K562 (cell line): ENCODE measurements at regions of chr1 and their contacts with region 1.

Region 1: GRCh38 chr1:44652445-44653106 is 21.7 kb downstream of the TMEM53 start:
- DNase-seq: peak; percentile 84 to 89 (median 86)
- ATAC-seq: peak; percentile 95
- H3K4me3 ChIP-seq: no peak overlapping the region
- H3K27ac ChIP-seq: no peak overlapping the region
- H3K4me1 ChIP-seq: peaks cover 0 to 17% of the 10 kb centered on the region in 2 experiments; a peak in 2 of 5 replicates
- H3K27me3 ChIP-seq: no peaks in the 10 kb centered on the region
- CTCF ChIP-seq: peak; percentile 96 to 99 (median 98)
- EP300 ChIP-seq: no peak
- POLR2A ChIP-seq: no peak
- RAD21 ChIP-seq: peak; percentile 93 to 99

Region 2: DNA sequence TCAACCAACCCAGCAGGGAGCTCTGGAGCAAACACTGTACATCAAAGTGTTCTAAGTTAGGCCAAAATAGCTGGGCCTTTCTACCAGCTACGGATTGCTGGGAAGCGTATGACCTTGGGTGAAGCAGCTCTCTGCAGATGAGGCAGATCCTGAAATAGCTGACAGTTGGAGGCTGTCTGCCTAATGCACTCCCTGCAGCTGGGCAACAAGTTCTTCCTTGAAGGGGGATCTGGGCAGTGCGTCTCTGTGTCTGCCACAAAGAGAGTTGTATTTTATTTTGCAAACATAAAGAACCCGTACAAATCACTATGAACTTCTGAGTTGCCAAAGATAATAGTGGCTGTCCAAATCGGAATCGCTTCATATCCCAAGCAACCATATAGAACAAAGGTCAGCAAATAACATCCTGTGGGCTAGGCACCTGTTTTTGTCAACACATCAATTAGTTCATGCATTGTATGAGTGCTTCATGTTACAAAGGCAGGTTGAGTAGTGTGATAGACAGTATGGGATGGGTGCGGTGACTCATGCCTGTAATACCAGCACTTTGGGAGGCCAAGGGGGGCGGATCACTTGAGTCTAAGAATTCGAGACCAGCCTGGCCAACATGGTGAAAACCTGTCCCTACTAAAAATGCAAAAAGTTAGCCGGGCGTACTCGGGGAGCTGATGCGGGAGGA is 563.1 kb before region 1 on chr1:
- CTCF ChIA-PET with region 1: no interaction called
- POLR2A ChIA-PET with region 1: interaction called, 3 read pairs
- in situ Hi-C with region 1: no loop called
- intact Hi-C with region 1: loop called (anchors 2 kb)
- DNase-seq: peak in 1 of 4 experiments; percentile 46
- ATAC-seq: peak; percentile 56
- H3K4me3 ChIP-seq: no peak overlapping the region
- H3K27ac ChIP-seq: no peak overlapping the region
- H3K4me1 ChIP-seq: peaks cover 3 to 19% of the 10 kb centered on the region in 2 experiments; a peak in 3 of 5 replicates
- H3K27me3 ChIP-seq: no peaks in the 10 kb centered on the region; a peak in 1 of 5 replicates
- CTCF ChIP-seq: no peak
- EP300 ChIP-seq: no peak
- POLR2A ChIP-seq: no peak
- RAD21 ChIP-seq: no peak

Region 3: DNA sequence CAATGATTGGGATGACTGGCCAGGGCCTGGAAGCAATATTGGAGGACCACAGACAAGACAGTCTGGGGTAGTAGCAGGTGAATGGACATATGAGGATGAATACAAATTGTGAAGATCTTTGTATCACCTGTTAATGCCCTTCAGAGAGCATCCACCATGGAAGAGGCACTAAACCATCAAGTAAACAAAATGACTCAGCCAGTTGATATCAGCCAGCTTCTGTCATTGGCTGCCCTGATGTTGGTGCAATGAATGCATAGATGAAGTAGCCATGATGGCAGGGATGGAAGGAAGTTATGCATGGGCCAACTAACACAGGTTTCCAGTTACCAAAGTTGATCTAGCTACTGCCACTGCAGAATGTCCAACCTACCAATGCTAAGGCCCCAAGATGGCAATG is 281.4 kb before region 1 on chr1:
- CTCF ChIA-PET with region 1: no interaction called
- POLR2A ChIA-PET with region 1: interaction called, 3 read pairs
- in situ Hi-C with region 1: loop called (anchors 5 kb)
- intact Hi-C with region 1: no loop called
- DNase-seq: no peak
- ATAC-seq: no peak
- H3K4me3 ChIP-seq: no peak overlapping the region
- H3K27ac ChIP-seq: no peak overlapping the region
- H3K4me1 ChIP-seq: no peaks in the 10 kb centered on the region; a peak in 1 of 5 replicates
- H3K27me3 ChIP-seq: peaks cover 31 to 38% of the 10 kb centered on the region in 2 experiments
- CTCF ChIP-seq: no peak
- EP300 ChIP-seq: no peak
- POLR2A ChIP-seq: no peak
- RAD21 ChIP-seq: no peak

Region 4: GRCh38 chr1:44571712-44572571 is 80.6 kb before region 1 on chr1:
- CTCF ChIA-PET with region 1: interaction called, 11 read pairs
- POLR2A ChIA-PET with region 1: no interaction called
- in situ Hi-C with region 1: no loop called
- intact Hi-C with region 1: loop called (anchors 1 kb)
- DNase-seq: peak; percentile 58 to 62 (median 60)
- ATAC-seq: peak; percentile 85
- H3K4me3 ChIP-seq: no peak overlapping the region
- H3K27ac ChIP-seq: no peak overlapping the region
- H3K4me1 ChIP-seq: no peaks in the 10 kb centered on the region
- H3K27me3 ChIP-seq: peaks cover 43 to 49% of the 10 kb centered on the region in 2 experiments
- CTCF ChIP-seq: peak; percentile 56 to 71 (median 65)
- EP300 ChIP-seq: no peak
- POLR2A ChIP-seq: no peak
- RAD21 ChIP-seq: peak in 1 of 2 experiments; percentile 62; a peak in 2 of 4 replicates

Region 5: GRCh38 chr1:44631647-44632539 is 20.7 kb before region 1 on chr1:
- CTCF ChIA-PET with region 1: no interaction called
- POLR2A ChIA-PET with region 1: interaction called, 328 read pairs
- in situ Hi-C with region 1: no loop called
- intact Hi-C with region 1: no loop called
- DNase-seq: peak; percentile 95 to 96 (median 96)
- ATAC-seq: peak; percentile 87
- H3K4me3 ChIP-seq: peak overlapping the region; percentile 78
- H3K27ac ChIP-seq: peak overlapping the region; percentile 90
- H3K4me1 ChIP-seq: peaks cover 49 to 60% of the 10 kb centered on the region in 2 experiments; a peak in 4 of 5 replicates
- H3K27me3 ChIP-seq: no peaks in the 10 kb centered on the region
- CTCF ChIP-seq: 0 out of 6 replicates have a peak, but pooled peaks of 1 of the 3 experiments have one; percentile 3
- EP300 ChIP-seq: no peak; the same call in 1 of the 2 replicates
- POLR2A ChIP-seq: peak; percentile 89
- RAD21 ChIP-seq: no peak

Region 6: DNA sequence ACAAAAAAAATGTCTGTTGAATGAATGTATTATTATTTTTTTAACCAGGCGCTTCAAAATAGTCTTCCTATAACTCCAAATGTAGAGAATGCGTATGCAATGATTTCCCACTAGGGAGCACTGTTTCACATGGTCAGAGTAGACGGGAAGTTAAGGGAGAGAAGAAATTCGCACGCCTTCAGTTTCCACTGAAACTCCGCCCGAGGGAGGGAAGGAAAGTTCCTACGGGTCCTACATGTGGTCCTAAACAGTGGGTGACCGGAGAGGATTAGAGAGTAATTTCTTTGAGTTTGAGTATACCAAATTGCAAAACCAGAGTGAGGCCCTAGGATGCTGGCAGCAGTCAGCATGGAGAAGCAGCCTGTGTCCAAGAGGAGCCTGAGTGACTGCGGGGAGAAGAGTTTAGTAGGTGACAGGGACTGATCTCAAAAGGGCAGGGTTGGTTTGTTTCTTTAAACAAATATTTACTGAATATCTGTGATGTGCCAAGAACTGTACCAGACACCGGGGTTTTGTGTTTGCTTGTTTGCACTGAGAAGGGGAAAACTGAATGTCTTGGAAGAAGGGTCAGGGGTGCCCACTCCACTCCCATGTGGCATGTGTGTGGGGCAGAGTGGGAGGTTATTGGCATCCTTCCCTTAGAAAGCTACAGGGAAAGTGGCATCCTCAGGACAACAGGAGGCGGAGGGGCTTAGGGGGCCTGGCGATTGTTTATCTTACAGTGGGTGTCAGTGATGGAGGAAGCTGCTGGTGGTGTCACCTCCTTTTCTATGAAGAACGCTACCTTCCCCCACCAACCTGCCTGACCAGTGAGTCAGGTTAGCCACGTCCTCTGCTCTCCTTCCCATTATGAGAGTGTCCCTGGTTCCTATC is 55.6 kb after region 1 on chr1:
- CTCF ChIA-PET with region 1: no interaction called
- POLR2A ChIA-PET with region 1: interaction called, 3 read pairs
- in situ Hi-C with region 1: no loop called
- intact Hi-C with region 1: loop called (anchors 5 kb)
- DNase-seq: peak; percentile 60 to 77 (median 64)
- ATAC-seq: peak; percentile 92
- H3K4me3 ChIP-seq: no peak overlapping the region
- H3K27ac ChIP-seq: no peak overlapping the region
- H3K4me1 ChIP-seq: peaks cover 0 to 4% of the 10 kb centered on the region in 2 experiments; a peak in 2 of 5 replicates
- H3K27me3 ChIP-seq: peaks cover 39% of the 10 kb centered on the region in 2 experiments
- CTCF ChIP-seq: peak; percentile 67 to 90 (median 81); a peak in 5 of 6 replicates
- EP300 ChIP-seq: no peak
- POLR2A ChIP-seq: no peak
- RAD21 ChIP-seq: peak; percentile 59 to 71

Region 7: DNA sequence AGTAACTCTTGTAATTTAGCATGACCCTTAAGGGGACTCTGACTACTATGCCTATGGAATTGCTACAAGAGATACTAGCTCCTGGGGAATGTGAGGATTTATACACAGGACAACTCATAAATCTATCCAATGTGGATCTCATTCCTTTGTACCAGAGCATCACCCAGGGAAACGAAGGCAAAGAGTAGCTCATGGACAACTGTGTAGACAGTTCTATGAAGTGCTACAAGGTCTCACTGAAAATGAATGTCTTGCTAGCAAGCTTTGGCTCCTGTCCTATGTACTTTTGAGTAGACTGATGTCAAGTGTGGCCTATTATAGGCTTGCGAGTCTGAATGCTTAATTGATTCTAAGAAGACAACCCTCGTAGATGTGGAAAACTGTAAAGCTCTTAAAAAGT is 460.1 kb after region 1 on chr1:
- CTCF ChIA-PET with region 1: no interaction called
- POLR2A ChIA-PET with region 1: no interaction called
- in situ Hi-C with region 1: no loop called
- intact Hi-C with region 1: no loop called
- DNase-seq: no peak
- ATAC-seq: no peak
- H3K4me3 ChIP-seq: no peak overlapping the region
- H3K27ac ChIP-seq: no peak overlapping the region
- H3K4me1 ChIP-seq: no peaks in the 10 kb centered on the region
- H3K27me3 ChIP-seq: peaks cover 7 to 14% of the 10 kb centered on the region in 2 experiments; a peak in 4 of 5 replicates
- CTCF ChIP-seq: no peak
- EP300 ChIP-seq: no peak
- POLR2A ChIP-seq: no peak
- RAD21 ChIP-seq: no peak